ENCODE measurements at regions of chr15 and their contacts with region 1.

Region 1: DNA sequence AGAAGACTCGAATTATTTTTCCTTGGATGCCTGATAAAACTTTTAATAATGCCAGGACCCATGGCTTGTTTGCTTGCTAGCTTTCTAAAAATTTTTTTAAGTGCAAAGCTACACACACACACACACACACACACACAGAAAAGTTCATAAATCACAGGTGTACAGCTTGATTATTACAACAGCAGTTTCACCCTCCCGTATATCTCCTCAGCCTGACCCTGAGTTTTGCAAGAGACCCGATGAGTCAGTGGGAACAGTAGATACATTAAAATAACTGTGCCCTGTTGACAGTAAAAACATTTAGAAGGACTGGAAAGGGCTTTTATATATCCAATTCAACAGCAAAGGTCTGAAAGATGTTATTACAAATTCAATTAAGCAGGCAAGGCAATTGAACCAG is 46.7 kb downstream of the EMC4 start:
- DNase-seq: no peak
- ATAC-seq: peak in 4 of 8 donors; percentile 70 to 91 (median 77)
- H3K4me3 ChIP-seq: no peak overlapping the region
- H3K27ac ChIP-seq: peak overlapping the region in 1 of 10 donors; percentile 26
- H3K4me1 ChIP-seq: peaks cover 0 to 10% (median 0%) of the 10 kb centered on the region in 9 donors
- H3K27me3 ChIP-seq: no peaks in the 10 kb centered on the region
- CTCF ChIP-seq: no peak

Region 2: GRCh38 chr15:34122771-34123183 is 148.7 kb before region 1 on chr15:
- intact Hi-C with region 1: no loop called
- DNase-seq: no peak
- ATAC-seq: no peak
- H3K4me3 ChIP-seq: no peak overlapping the region
- H3K27ac ChIP-seq: no peak overlapping the region
- H3K4me1 ChIP-seq: no peaks in the 10 kb centered on the region
- H3K27me3 ChIP-seq: peaks cover 0 to 3% (median 0%) of the 10 kb centered on the region in 7 donors
- CTCF ChIP-seq: no peak

Region 3: GRCh38 chr15:34223904-34224596 is 47.4 kb before region 1 on chr15:
- intact Hi-C with region 1: no loop called
- DNase-seq: peak in 1 of 2 donors; percentile 5
- ATAC-seq: peak in 7 of 8 donors; percentile 4 to 44 (median 17)
- H3K4me3 ChIP-seq: peak overlapping the region; percentile 62 to 94 (median 82)
- H3K27ac ChIP-seq: peak overlapping the region; percentile 76 to 97 (median 94)
- H3K4me1 ChIP-seq: peaks cover 3 to 26% (median 19%) of the 10 kb centered on the region in 9 donors
- H3K27me3 ChIP-seq: no peaks in the 10 kb centered on the region
- CTCF ChIP-seq: no peak

Region 4: DNA sequence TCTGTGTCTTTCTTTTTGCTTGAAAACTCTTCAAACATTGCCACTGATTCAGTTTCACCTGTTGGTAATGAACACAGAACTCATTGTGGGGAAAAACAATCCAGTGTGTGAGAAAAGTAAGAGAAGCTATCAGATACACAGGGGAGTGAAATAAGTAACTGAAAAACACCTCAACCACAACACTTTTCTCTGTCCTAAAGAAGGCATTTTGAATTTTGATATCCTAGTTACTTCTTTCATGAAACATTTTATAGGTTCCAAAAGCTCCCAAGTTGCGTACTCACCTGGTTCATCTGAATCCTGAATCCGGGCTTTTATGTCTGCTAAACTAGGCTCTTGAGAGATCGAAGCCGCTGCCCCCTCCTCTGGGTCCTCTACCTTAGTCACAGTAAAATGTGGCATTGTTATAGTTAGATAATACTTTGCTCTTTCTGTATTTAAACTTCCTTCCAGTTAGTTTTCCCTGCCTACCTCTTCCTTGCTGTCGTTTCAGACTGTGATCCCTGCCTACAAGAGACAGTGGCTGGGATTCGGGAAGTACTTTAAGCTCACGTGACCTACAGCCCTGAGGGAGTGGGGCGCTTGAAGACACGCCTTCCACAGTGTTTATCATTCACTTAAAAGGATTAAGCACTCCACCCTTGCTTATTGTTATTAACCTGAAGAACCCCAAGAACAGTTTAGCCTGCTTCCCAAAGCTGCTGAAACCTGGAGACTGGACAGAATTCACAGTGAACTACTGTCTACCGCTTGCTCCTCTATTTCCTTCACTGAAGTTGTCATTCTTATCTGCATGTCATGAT is 47.0 kb after region 1 on chr15:
- intact Hi-C with region 1: loop called in 3 of 10 experiments (anchors 5 to 10 kb)
- DNase-seq: peak in 1 of 2 donors; percentile 72
- ATAC-seq: peak; percentile 93 to 99 (median 97)
- H3K4me3 ChIP-seq: peak overlapping the region in 9 of 10 donors; percentile 36 to 73 (median 57)
- H3K27ac ChIP-seq: peak overlapping the region in 9 of 10 donors; percentile 4 to 82 (median 63)
- H3K4me1 ChIP-seq: peaks cover 0 to 32% (median 29%) of the 10 kb centered on the region in 9 donors
- H3K27me3 ChIP-seq: no peaks in the 10 kb centered on the region
- CTCF ChIP-seq: no peak

Region 5: GRCh38 chr15:34327906-34328305 is 56.4 kb after region 1 on chr15:
- intact Hi-C with region 1: loop called in 2 of 10 experiments (anchors 10 kb)
- DNase-seq: no peak
- ATAC-seq: no peak
- H3K4me3 ChIP-seq: no peak overlapping the region
- H3K27ac ChIP-seq: peak overlapping the region in 3 of 10 donors; percentile 22 to 41 (median 28)
- H3K4me1 ChIP-seq: peaks cover 0 to 29% (median 4%) of the 10 kb centered on the region in 9 donors
- H3K27me3 ChIP-seq: no peaks in the 10 kb centered on the region
- CTCF ChIP-seq: no peak